ENCODE measurements at regions of chr1 and their contacts with region 1.

Region 1: GRCh38 chr1:161726596-161727457 is 5.5 kb downstream of the FCRLB start:
- DNase-seq: peak; percentile 76 to 85
- ATAC-seq: peak; percentile 65 to 79 (median 70)
- H3K4me3 ChIP-seq: peak overlapping the region; percentile 63
- H3K4me3 Mint-ChIP-seq: peak overlapping the region; percentile 100
- H3K27ac ChIP-seq: peak overlapping the region; percentile 79
- H3K27ac Mint-ChIP-seq: peak overlapping the region; percentile 98
- H3K4me1 ChIP-seq: peaks cover 51% of the 10 kb centered on the region
- H3K4me1 Mint-ChIP-seq: peaks cover 65 to 83% of the 10 kb centered on the region in 2 donors
- H3K27me3 ChIP-seq: no peaks in the 10 kb centered on the region
- H3K27me3 Mint-ChIP-seq: no peaks in the 10 kb centered on the region
- CTCF ChIP-seq: no peak

Region 2: DNA sequence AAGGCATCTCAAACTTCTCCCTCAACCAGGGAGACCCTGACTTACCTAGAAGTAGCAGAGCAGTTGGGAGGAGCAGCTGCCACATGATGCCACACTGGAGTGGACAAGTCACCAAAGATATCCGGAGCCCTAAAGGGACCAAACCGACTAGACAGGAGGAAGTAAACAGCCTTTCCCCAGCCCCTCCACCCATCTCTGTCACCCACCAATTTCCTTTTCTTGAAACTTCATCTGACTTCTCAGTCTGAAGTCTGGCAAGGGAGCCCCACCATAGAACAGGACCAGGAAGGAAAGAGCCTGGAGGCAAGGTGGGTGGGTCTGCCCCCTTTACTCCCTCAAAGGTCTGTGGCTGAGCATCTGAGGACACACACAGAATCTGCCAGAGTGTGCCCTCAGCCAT is 177.2 kb before region 1 on chr1 and contains the start of gene FCGR3A:
- intact Hi-C with region 1: loop called (anchors 10 kb)
- DNase-seq: peak in 1 of 2 donors; percentile 30
- ATAC-seq: peak; percentile 21 to 49 (median 42)
- H3K4me3 ChIP-seq: peak within 1 kb of the TSS; percentile 40
- H3K4me3 Mint-ChIP-seq: peak within 1 kb of the TSS; percentile 92
- H3K27ac ChIP-seq: peak within 1 kb of the TSS; percentile 74
- H3K27ac Mint-ChIP-seq: peak within 1 kb of the TSS; percentile 97 to 100
- H3K4me1 ChIP-seq: peaks cover 50% of the 10 kb centered on the region
- H3K4me1 Mint-ChIP-seq: peaks cover 52 to 69% of the 10 kb centered on the region in 2 donors
- H3K27me3 ChIP-seq: no peaks in the 10 kb centered on the region
- H3K27me3 Mint-ChIP-seq: no peaks in the 10 kb centered on the region
- CTCF ChIP-seq: no peak
- total RNA-seq, gene FCGR3A: 557 to 892 (median 848) TPM

Region 3: DNA sequence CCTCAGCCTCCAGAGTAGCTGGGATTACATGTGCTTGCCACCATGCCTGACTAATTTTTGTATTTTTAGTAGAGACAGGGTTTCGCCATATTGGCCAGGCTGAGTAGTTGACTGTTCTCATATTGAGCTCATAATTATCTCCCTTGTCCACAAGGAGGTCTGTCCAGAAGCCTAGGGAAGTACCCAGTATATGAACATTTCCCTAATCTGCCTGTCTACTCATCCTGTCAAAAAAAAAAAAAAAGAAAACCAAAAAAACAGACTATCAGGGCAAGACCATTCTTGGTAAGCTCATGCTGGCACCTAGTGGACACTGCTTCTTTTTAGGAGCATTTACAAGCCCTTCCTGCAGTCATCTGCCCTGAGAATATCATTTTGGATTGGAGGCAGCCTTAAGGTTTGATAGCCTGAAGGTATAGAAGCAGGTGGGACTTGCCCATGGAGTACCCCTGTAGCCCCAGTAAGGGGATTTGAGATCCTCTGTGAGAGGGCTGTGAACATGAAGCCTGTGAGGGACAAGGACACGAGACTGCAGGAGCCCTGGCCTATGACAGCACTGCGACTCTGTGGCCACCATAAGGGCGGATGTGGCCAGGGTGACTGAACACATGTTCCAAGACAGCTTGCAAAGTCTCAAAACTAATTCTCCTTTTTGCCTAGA is 11.9 kb after region 1 on chr1:
- intact Hi-C with region 1: loop called (anchors 1 kb)
- DNase-seq: peak; percentile 79 to 83
- ATAC-seq: peak; percentile 91 to 93 (median 92)
- H3K4me3 ChIP-seq: no peak overlapping the region
- H3K4me3 Mint-ChIP-seq: peak overlapping the region; percentile 58
- H3K27ac ChIP-seq: peak overlapping the region; percentile 57
- H3K27ac Mint-ChIP-seq: peak overlapping the region; percentile 81 to 84
- H3K4me1 ChIP-seq: peaks cover 32% of the 10 kb centered on the region
- H3K4me1 Mint-ChIP-seq: peaks cover 34 to 45% of the 10 kb centered on the region in 2 donors
- H3K27me3 ChIP-seq: no peaks in the 10 kb centered on the region
- H3K27me3 Mint-ChIP-seq: no peaks in the 10 kb centered on the region
- CTCF ChIP-seq: peak; percentile 55